ENCODE measurements at regions of chr16 and their contacts with region 1.

Region 1: DNA sequence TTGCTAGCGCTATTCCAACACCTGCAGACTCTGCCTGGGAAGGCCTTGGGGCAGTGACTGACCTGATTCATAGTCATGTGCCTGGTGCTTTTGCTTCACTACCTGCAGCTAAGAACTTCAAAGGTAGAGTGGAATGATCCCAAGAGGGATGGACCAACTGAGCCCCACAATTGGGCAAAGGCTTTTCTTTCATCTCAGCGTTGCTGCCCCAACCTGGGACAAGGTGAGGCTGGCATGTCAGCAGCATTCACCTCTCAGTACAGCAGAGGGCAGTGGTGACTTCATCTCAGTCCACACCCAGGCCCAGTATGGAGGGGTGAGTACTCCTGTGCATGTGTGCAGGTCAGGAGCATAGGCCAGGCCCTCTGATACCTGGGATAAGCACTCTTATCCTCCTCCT is 149.6 kb upstream of the GNAO1 start:
- DNase-seq: peak; percentile 57
- H3K4me3 Mint-ChIP-seq: no peak overlapping the region
- H3K27ac Mint-ChIP-seq: no peak overlapping the region
- H3K4me1 Mint-ChIP-seq: no peaks in the 10 kb centered on the region
- H3K27me3 Mint-ChIP-seq: peaks cover 34% of the 10 kb centered on the region
- CTCF ChIP-seq: peak; percentile 47

Region 2: DNA sequence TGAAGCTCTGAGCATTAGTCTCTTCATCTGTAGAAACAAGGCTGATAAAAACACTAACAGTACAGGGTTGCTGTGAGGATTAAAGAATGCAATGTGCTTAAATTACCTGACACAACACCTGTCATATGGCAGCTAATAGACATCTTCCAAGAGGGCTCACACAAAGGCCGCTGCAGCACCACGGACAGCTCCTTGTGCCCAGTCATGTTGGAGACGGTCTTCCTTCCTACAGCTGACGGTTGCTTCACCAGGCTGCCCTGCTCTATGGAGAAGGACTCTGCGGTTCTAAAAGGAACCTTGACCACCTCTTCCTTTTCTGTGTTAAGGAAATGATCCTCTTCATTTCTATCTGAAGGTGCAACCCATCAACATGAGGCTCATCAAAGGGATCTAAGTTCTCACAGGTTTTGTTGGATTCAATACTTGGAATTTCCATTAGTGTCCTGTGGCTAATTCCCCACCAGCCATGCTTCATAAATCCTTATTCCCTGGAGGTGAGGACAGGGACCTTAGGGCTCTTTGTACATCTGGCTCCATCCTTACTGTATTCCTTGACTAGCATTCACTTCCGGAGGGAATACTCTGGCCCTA is 27.6 kb before region 1 on chr16:
- CTCF ChIA-PET with region 1: no interaction called
- POLR2A ChIA-PET with region 1: no interaction called
- intact Hi-C with region 1: no loop called
- DNase-seq: peak; percentile 76
- H3K4me3 Mint-ChIP-seq: no peak overlapping the region
- H3K27ac Mint-ChIP-seq: no peak overlapping the region
- H3K4me1 Mint-ChIP-seq: no peaks in the 10 kb centered on the region
- H3K27me3 Mint-ChIP-seq: peaks cover 73% of the 10 kb centered on the region
- CTCF ChIP-seq: no peak

Region 3: GRCh38 chr16:56281256-56281805 is 239.6 kb after region 1 on chr16:
- CTCF ChIA-PET with region 1: interaction called, 5 read pairs
- POLR2A ChIA-PET with region 1: no interaction called
- intact Hi-C with region 1: loop called (anchors 1 kb)
- DNase-seq: peak; percentile 31
- H3K4me3 Mint-ChIP-seq: no peak overlapping the region
- H3K27ac Mint-ChIP-seq: no peak overlapping the region
- H3K4me1 Mint-ChIP-seq: no peaks in the 10 kb centered on the region
- H3K27me3 Mint-ChIP-seq: peaks cover 37% of the 10 kb centered on the region
- CTCF ChIP-seq: peak; percentile 29

Region 4: DNA sequence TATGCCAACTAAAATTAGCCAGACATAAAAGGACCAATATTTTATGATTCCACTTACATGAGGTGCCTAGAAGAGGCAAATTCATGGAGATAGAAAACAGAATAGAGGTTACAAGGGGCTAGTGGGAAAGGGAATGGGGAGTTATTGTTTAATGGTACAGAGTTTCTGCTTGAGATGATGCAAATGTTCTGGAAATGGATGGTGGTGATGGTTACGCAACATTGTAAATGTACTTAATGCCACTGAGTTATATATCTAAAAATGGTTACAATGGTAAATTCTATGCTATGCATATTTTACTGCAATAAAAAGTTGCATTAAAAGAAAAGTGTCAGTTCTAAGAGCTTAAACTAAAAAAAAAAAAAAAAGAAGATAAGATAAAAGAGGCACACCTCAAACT is 658.5 kb after region 1 on chr16:
- CTCF ChIA-PET with region 1: no interaction called
- POLR2A ChIA-PET with region 1: no interaction called
- intact Hi-C with region 1: no loop called
- DNase-seq: peak; percentile 49
- H3K4me3 Mint-ChIP-seq: no peak overlapping the region
- H3K27ac Mint-ChIP-seq: peak overlapping the region; percentile 16
- H3K4me1 Mint-ChIP-seq: peaks cover 10% of the 10 kb centered on the region
- H3K27me3 Mint-ChIP-seq: no peaks in the 10 kb centered on the region
- CTCF ChIP-seq: no peak